ENCODE measurements at regions of chr3 and their contacts with region 1.

Region 1: DNA sequence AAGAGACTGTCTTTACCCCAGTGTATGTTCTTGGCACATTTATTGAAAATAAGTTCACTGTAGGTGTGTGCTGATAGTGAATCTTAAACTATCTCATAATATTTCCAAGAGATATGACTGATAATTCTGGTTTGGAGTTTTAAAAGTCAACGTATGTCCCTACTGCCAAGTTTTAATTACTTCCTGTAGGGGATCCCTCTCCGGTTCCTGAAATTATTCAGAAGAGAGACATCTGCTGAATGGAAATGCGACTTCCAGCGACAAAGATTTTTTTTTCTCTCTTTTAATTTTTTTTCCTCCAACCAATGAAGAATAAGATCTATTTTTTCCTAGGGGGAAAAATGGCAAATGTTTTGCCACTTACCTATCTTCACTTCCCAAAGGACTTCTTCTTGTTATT is 498.9 kb upstream of the TGFBR2 start:
- DNase-seq: no peak
- ATAC-seq: no peak
- H3K4me3 ChIP-seq: no peak overlapping the region
- H3K27ac ChIP-seq: no peak overlapping the region
- H3K4me1 ChIP-seq: no peaks in the 10 kb centered on the region
- H3K27me3 ChIP-seq: no peaks in the 10 kb centered on the region
- CTCF ChIP-seq: no peak

Region 2: DNA sequence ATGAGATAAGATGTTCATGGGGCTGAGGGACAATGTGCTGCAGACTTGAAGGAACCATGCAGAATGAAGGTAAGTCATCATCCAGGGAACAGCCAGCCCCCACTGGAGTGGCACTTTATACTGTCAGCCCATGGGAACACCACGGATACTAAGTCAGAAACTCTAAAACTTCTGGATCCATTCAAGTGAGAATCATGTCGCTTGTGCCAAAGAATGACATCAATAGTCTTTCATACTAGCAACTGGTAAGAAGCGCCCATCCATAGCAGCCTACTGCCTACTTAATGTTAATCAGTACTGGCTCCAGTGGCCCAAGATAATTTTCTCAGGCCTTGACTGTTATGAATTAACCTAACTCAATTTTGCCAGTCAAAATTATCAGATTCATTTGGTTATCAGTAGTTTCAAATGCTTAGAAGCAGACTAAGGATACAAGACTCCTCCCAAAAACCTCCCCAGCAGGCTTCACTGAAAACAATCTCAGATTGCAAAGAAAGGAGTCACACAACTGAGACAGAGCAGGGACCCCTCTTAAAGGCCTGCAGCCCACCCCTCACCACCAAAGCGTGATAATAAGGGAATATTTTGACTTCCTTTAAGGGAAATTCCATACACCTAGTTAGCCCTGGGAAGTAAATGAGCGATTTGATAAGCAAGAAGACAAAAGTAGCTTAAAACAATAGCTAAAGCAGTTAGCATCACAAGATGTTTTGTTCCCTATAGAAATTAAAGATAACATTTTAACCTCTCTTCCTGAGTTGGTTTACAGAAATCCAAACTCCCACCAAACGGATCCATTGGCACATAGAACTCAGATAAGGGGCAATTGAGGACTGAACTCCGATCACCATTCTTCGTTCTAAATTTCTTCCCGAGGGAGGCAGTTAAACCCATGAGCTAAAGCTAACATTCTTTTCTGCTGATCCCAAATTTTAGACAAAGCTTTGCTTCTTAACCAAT is 597.7 kb after region 1 on chr3:
- intact Hi-C with region 1: loop called in 1 of 2 experiments (anchors 5 kb)
- DNase-seq: no peak
- ATAC-seq: no peak
- H3K4me3 ChIP-seq: no peak overlapping the region
- H3K27ac ChIP-seq: no peak overlapping the region
- H3K4me1 ChIP-seq: no peaks in the 10 kb centered on the region
- H3K27me3 ChIP-seq: no peaks in the 10 kb centered on the region
- CTCF ChIP-seq: no peak

Measured in psoas muscle (tissue), 8 donors.